K562 (cell line): ENCODE measurements at regions of chr3 and their contacts with region 1.

Region 1: GRCh38 chr3:186002884-186003472 is 65.2 kb upstream of the TRA2B start:
- DNase-seq: peak; percentile 23 to 53 (median 37)
- ATAC-seq: peak; percentile 91
- H3K4me3 ChIP-seq: no peak overlapping the region
- H3K27ac ChIP-seq: no peak overlapping the region
- H3K4me1 ChIP-seq: no peaks in the 10 kb centered on the region
- H3K27me3 ChIP-seq: peaks cover 0 to 4% of the 10 kb centered on the region in 2 experiments; a peak in 3 of 5 replicates
- CTCF ChIP-seq: peak; percentile 54 to 63 (median 58); a peak in 5 of 6 replicates
- EP300 ChIP-seq: no peak
- POLR2A ChIP-seq: no peak
- RAD21 ChIP-seq: peak in 1 of 2 experiments; percentile 68; a peak in 2 of 4 replicates

Region 2: GRCh38 chr3:186209810-186210752 is 207.1 kb after region 1 on chr3:
- CTCF ChIA-PET with region 1: no interaction called
- POLR2A ChIA-PET with region 1: no interaction called
- in situ Hi-C with region 1: no loop called
- intact Hi-C with region 1: no loop called
- DNase-seq: peak; percentile 48 to 66 (median 52)
- ATAC-seq: peak; percentile 92
- H3K4me3 ChIP-seq: no peak overlapping the region
- H3K27ac ChIP-seq: no peak overlapping the region
- H3K4me1 ChIP-seq: peaks cover 14 to 17% of the 10 kb centered on the region in 2 experiments
- H3K27me3 ChIP-seq: peaks cover 3 to 6% of the 10 kb centered on the region in 2 experiments; a peak in 1 of 5 replicates
- CTCF ChIP-seq: no peak
- EP300 ChIP-seq: no peak
- POLR2A ChIP-seq: no peak
- RAD21 ChIP-seq: no peak

Region 3: GRCh38 chr3:186241910-186242821 is 239.2 kb after region 1 on chr3:
- CTCF ChIA-PET with region 1: no interaction called
- POLR2A ChIA-PET with region 1: no interaction called
- in situ Hi-C with region 1: no loop called
- intact Hi-C with region 1: loop called (anchors 1 kb)
- DNase-seq: peak; percentile 74 to 83 (median 78)
- ATAC-seq: peak; percentile 99
- H3K4me3 ChIP-seq: peak overlapping the region; percentile 17
- H3K27ac ChIP-seq: no peak overlapping the region
- H3K4me1 ChIP-seq: peaks cover 7 to 10% of the 10 kb centered on the region in 2 experiments
- H3K27me3 ChIP-seq: peaks cover 4 to 12% of the 10 kb centered on the region in 2 experiments; a peak in 3 of 5 replicates
- CTCF ChIP-seq: peak; percentile 83 to 93 (median 87)
- EP300 ChIP-seq: no peak
- POLR2A ChIP-seq: no peak
- RAD21 ChIP-seq: peak; percentile 80 to 84